Left cardiac atrium (tissue), 4 donors: ENCODE measurements at regions of chr10 and their contacts with region 1.

Region 1: DNA sequence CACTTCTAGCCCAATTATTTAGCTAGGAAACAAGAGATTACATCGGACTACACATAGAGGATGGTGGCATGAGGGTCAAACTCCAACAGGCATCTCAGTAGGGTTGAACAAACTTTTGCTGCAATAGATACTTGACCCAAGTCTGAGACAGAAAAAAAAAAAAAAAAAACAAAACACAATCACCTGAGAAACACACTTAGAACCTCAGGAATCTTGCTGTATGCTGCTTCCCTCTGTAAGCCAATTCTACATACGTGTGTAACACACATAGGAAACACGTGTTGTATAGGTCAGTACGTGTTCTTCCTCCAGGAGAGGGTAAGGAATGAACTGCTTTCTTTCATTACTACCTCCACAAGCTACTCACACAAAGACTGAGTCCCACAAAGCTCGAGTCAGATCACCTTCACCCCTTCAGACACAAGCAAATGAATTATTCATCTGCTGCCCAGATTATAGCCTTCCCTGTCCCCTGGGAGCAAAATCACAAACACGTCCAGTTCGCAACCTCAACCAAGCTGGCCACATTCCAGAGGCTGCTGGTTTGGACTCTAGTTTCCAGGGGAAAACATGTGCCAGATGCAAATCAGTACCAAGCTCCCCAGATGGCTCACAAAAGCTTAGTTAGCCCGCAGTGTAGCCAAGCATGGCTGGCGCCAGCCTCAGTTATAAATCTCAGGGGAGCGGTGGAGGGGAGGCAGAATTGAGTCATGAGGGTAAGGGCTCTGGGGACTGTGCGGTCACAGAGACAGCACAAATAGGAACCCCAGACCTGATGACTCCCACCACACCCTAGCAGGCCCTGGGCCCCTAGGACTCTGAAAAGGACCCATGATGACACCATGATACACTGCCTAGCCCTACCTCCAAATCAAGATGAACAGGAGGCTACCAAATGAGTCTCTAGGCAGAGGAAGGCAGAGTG is 15.1 kb downstream of the PSAP start:
- DNase-seq: peak; percentile 83
- ATAC-seq: peak; percentile 45 to 62

Region 2: DNA sequence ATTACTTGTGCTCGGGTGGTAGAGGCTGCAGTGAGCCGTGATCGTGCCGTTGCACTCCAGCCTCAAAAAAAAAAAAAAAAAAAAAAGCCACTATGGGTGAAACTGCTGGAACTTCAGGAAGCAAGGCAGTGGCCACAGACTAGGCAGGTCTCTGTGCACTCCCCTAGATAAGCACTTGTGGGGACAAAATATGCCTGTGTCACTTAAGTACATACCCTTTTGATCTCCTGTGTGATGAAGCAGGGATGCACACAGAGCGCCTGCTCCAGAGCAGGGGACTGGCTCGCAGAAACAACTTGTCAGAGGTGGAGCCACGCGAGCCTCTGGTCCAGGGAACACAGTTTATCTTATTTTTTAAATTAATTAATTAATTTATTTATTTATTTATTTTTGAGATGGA is 58.0 kb after region 1 on chr10:
- intact Hi-C with region 1: loop called in 1 of 2 experiments (anchors 10 kb)
- DNase-seq: no peak
- ATAC-seq: no peak

Region 3: DNA sequence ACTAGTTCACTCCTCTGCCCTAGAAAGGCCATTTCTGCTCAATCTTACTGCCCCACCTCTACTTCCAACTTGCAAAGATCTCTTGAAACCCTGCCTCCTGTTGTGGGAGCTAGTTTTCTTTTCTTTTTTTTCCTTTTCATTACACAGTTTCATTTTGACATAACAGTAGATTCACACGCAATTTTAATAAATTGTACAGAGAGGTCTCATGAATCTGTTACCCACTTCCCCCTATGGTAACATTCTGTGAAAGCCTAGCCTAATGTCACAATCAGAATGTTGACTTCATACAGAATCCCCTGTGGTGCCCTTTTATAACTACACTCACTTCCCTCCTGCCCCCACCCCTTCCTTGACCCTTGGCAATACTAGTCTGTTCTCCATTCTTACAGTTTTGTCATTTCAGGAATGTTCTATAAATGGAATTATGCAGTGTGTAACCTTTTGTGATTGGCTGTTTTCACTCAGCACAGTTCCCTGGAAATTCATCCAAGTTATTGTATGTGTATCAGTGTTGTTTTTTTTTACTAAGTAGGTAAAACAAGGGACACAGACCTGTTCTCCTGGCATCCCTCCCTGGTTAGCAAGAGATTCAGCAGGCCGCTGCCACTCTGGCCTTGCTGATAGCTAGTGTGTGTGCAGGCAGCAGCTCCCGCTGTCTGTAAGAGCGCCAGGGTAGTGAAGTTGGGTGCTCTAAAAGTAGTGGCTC is 149.8 kb after region 1 on chr10:
- intact Hi-C with region 1: no loop called
- DNase-seq: peak; percentile 56
- ATAC-seq: peak; percentile 23 to 71

Region 4: DNA sequence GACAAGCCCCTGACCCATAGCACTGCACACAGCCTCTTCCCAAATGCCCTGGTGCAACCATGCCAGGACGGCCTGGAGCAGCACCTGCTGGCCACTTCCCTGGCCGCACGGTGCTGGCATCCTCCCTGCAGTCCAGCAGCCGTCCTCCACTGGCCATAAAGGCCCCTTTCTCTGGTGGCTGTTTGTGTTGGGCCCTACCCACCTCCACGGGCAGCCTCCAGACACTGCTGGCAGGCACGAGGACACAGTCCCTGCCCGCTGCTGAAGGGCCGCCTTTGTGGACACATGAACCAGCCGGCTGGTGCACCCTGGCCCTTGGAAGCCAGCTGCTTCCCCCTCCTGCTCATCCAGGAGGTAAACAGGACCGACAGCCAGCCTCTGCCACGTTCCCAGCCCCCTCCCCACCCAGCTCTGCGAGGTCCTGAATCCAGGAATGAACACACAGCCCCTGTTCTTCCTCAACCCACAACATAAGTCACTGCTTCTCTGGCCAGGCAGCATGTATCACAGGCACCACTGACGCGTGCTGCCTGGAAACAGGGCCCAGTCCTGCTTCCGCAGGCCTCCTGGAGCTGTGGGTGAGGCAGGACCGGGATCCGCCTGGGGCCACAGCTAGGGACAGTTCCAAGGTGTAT is 208.6 kb after region 1 on chr10:
- intact Hi-C with region 1: no loop called
- DNase-seq: no peak
- ATAC-seq: peak; percentile 78 to 81

Region 5: GRCh38 chr10:72146071-72146470 is 310.1 kb after region 1 on chr10:
- intact Hi-C with region 1: no loop called
- DNase-seq: no peak
- ATAC-seq: peak; percentile 15 to 27